Esophagus muscularis mucosa (tissue), 4 donors: ENCODE measurements at regions of chr6 and their contacts with region 1.

Region 1: DNA sequence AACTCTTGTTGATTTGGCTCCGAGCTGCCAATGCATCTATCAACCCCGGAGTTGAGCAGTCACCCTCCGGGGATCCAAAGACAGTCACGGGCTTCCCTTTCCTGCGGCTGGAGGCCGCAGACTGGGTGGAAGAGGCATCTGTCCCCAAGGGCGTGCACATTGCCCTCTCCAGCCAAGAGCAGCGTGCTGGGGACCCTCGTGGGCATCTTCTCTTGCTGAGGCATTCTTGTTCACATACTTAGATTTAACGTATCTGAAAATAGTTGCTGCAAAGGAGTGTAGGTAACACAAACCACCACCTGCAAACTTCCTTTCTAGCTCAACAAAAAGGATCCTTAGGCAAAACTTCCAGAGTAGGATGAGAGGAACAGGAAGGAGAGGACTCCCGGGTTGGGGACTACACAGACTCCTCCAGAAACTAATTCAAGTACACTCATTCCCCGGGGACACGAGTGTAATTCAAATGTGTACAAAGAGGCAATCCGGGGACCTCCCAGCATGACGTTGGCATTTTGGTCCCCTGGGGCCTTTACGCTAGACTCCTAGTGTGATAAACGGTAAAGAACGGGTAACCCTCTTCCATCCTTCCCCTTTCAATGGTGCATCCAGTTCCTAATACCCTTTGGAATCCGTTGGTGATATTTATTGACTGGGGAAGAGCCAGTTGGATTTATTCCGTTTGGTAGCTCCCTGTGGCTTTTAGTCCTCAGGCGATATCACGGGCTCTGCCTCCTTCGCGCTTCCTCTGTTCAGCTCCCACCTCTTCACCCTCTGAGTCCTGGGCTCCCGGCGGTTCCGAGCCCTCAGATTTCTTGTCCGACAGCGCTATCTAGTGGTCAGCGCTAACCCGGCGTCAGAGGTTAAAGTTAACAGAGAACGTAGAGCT is 2.7 kb upstream of the COL12A1 start:
- DNase-seq: no peak
- H3K4me3 ChIP-seq: peak overlapping the region; percentile 29 to 85 (median 42)
- H3K27ac ChIP-seq: peak overlapping the region; percentile 28 to 95 (median 77)
- H3K4me1 ChIP-seq: peaks cover 44 to 60% (median 55%) of the 10 kb centered on the region in 4 donors
- H3K27me3 ChIP-seq: peaks cover 0 to 6% (median 0%) of the 10 kb centered on the region in 4 donors
- CTCF ChIP-seq: peak; percentile 87 to 89 (median 88)
- EP300 ChIP-seq: no peak
- POLR2A ChIP-seq: no peak

Region 2: GRCh38 chr6:73739096-73739495 is 1469.4 kb before region 1 on chr6:
- intact Hi-C with region 1: loop called (anchors 5 kb)
- DNase-seq: no peak
- H3K4me3 ChIP-seq: no peak overlapping the region
- H3K27ac ChIP-seq: no peak overlapping the region
- H3K4me1 ChIP-seq: peaks cover 0 to 16% (median 12%) of the 10 kb centered on the region in 4 donors
- H3K27me3 ChIP-seq: no peaks in the 10 kb centered on the region
- CTCF ChIP-seq: peak; percentile 77 to 85 (median 80)
- EP300 ChIP-seq: no peak
- POLR2A ChIP-seq: no peak

Region 3: GRCh38 chr6:73969971-73970970 is 1238.3 kb before region 1 on chr6:
- intact Hi-C with region 1: loop called (anchors 5 kb)
- DNase-seq: no peak
- H3K4me3 ChIP-seq: no peak overlapping the region
- H3K27ac ChIP-seq: no peak overlapping the region
- H3K4me1 ChIP-seq: peaks cover 0 to 13% (median 12%) of the 10 kb centered on the region in 4 donors
- H3K27me3 ChIP-seq: no peaks in the 10 kb centered on the region
- CTCF ChIP-seq: peak; percentile 57 to 71 (median 69)
- EP300 ChIP-seq: no peak
- POLR2A ChIP-seq: no peak

Region 4: DNA sequence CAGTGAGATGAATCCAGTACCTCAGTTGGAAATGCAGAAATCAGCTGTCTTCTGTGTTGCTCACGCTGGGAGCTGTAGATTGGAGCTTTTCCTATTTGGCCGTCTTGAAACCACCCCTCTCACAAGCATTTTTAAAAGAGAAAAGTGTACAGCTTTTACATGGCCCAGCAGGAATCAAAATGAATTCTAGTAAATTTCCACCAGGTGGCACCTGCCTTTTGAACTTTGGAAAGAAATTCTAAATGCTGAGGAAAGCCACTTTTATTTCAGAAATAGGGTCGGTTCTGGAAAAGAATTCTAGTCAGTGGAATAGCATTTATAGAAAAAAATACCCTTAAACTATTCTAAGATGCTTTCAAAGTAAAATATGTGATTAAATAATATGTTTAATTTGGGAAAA is 864.7 kb before region 1 on chr6:
- intact Hi-C with region 1: loop called (anchors 10 kb)
- DNase-seq: no peak
- H3K4me3 ChIP-seq: no peak overlapping the region
- H3K27ac ChIP-seq: no peak overlapping the region
- H3K4me1 ChIP-seq: no peaks in the 10 kb centered on the region
- H3K27me3 ChIP-seq: no peaks in the 10 kb centered on the region
- CTCF ChIP-seq: peak; percentile 29 to 36 (median 32)
- EP300 ChIP-seq: no peak
- POLR2A ChIP-seq: no peak

Region 5: GRCh38 chr6:74606581-74607071 is 601.9 kb before region 1 on chr6:
- intact Hi-C with region 1: loop called (anchors 10 kb)
- DNase-seq: no peak
- H3K4me3 ChIP-seq: peak overlapping the region in 1 of 4 donors; percentile 8
- H3K27ac ChIP-seq: peak overlapping the region; percentile 75 to 79 (median 76)
- H3K4me1 ChIP-seq: peaks cover 0 to 54% (median 50%) of the 10 kb centered on the region in 4 donors
- H3K27me3 ChIP-seq: no peaks in the 10 kb centered on the region
- CTCF ChIP-seq: no peak
- EP300 ChIP-seq: no peak
- POLR2A ChIP-seq: no peak

Region 6: GRCh38 chr6:75115481-75115880 is 93.1 kb before region 1 on chr6:
- intact Hi-C with region 1: loop called (anchors 5 kb)
- DNase-seq: no peak
- H3K4me3 ChIP-seq: peak overlapping the region in 2 of 4 donors; percentile 5 to 15
- H3K27ac ChIP-seq: peak overlapping the region; percentile 58 to 70 (median 66)
- H3K4me1 ChIP-seq: peaks cover 0 to 52% (median 36%) of the 10 kb centered on the region in 4 donors
- H3K27me3 ChIP-seq: no peaks in the 10 kb centered on the region
- CTCF ChIP-seq: no peak
- EP300 ChIP-seq: no peak
- POLR2A ChIP-seq: no peak